Gastrocnemius medialis (tissue), 4 donors: ENCODE measurements at regions of chr4 and their contacts with region 1.

Region 1: GRCh38 chr4:2963175-2963965 is at the starts of genes GRK4 and NOP14:
- DNase-seq: peak; percentile 96 to 98
- ATAC-seq: peak; percentile 83 to 91
- H3K4me3 ChIP-seq: peak within 1 kb of the TSS; percentile 78 to 99 (median 86)
- H3K27ac ChIP-seq: peak within 1 kb of the TSS; percentile 91 to 95 (median 94)
- H3K4me1 ChIP-seq: peaks cover 25 to 28% of the 10 kb centered on the region in 2 donors
- H3K27me3 ChIP-seq: no peaks in the 10 kb centered on the region
- CTCF ChIP-seq: peak in 2 of 5 experiments; percentile 24 to 48
- POLR2A ChIP-seq: peak; percentile 85 to 87
- total RNA-seq, gene GRK4: 2.8 to 5.8 (median 3.7) TPM
- total RNA-seq, gene NOP14: 16.6 to 46.2 (median 36.2) TPM

Region 2: GRCh38 chr4:2241410-2242353 is 721.7 kb before region 1 on chr4 and contains the starts of genes HAUS3 and POLN:
- in situ Hi-C with region 1: loop called in 1 of 4 experiments (anchors 25 kb)
- intact Hi-C with region 1: loop called (anchors 5 kb)
- DNase-seq: peak; percentile 96 to 97
- ATAC-seq: peak; percentile 97 to 98
- H3K4me3 ChIP-seq: peak within 1 kb of the TSS; percentile 88 to 98 (median 92)
- H3K27ac ChIP-seq: peak within 1 kb of the TSS; percentile 75 to 86 (median 82)
- H3K4me1 ChIP-seq: peaks cover 34 to 39% of the 10 kb centered on the region in 2 donors
- H3K27me3 ChIP-seq: no peaks in the 10 kb centered on the region
- CTCF ChIP-seq: no peak
- POLR2A ChIP-seq: peak; percentile 74 to 86
- total RNA-seq, gene HAUS3: 4.8 to 12.1 (median 9.5) TPM
- total RNA-seq, gene POLN: 0.71 to 2.0 (median 0.86) TPM in 3 of 4 donors, not detected in the other

Region 3: DNA sequence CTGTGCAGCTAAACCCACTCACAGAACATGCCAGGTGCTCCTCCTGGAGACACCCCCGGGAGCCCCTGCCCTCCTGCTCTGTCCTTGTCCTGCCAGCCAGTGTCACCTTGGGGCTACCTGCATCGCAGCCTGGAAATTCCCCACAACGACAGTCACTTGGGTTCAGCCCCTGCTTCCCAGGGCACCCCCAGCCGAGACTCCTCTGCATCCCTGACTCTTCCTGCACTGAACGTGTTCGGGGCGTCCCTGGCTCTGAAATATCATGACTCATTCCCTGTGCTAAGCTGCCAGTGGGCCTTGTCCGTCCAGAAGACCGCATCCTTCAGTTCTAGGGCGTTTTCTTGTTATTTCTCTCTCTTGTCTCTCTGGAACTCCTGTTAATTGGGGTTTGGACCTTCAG is 538.8 kb before region 1 on chr4:
- in situ Hi-C with region 1: loop called in 1 of 4 experiments (anchors 10 kb)
- intact Hi-C with region 1: no loop called
- DNase-seq: no peak
- ATAC-seq: no peak
- H3K4me3 ChIP-seq: no peak overlapping the region
- H3K27ac ChIP-seq: no peak overlapping the region
- H3K4me1 ChIP-seq: no peaks in the 10 kb centered on the region
- H3K27me3 ChIP-seq: peaks cover 0 to 15% (median 8%) of the 10 kb centered on the region in 3 donors
- CTCF ChIP-seq: no peak
- POLR2A ChIP-seq: no peak

Region 4: GRCh38 chr4:2462218-2462991 is 501.0 kb before region 1 on chr4:
- in situ Hi-C with region 1: no loop called
- intact Hi-C with region 1: no loop called
- DNase-seq: peak; percentile 38 to 46
- ATAC-seq: peak; percentile 81 to 86
- H3K4me3 ChIP-seq: peak overlapping the region; percentile 34 to 73 (median 58)
- H3K27ac ChIP-seq: peak overlapping the region in 3 of 4 donors; percentile 34 to 37 (median 35)
- H3K4me1 ChIP-seq: peaks cover 5 to 8% of the 10 kb centered on the region in 2 donors
- H3K27me3 ChIP-seq: no peaks in the 10 kb centered on the region
- CTCF ChIP-seq: peak in 4 of 5 experiments; percentile 36 to 78 (median 62)
- POLR2A ChIP-seq: no peak

Region 5: DNA sequence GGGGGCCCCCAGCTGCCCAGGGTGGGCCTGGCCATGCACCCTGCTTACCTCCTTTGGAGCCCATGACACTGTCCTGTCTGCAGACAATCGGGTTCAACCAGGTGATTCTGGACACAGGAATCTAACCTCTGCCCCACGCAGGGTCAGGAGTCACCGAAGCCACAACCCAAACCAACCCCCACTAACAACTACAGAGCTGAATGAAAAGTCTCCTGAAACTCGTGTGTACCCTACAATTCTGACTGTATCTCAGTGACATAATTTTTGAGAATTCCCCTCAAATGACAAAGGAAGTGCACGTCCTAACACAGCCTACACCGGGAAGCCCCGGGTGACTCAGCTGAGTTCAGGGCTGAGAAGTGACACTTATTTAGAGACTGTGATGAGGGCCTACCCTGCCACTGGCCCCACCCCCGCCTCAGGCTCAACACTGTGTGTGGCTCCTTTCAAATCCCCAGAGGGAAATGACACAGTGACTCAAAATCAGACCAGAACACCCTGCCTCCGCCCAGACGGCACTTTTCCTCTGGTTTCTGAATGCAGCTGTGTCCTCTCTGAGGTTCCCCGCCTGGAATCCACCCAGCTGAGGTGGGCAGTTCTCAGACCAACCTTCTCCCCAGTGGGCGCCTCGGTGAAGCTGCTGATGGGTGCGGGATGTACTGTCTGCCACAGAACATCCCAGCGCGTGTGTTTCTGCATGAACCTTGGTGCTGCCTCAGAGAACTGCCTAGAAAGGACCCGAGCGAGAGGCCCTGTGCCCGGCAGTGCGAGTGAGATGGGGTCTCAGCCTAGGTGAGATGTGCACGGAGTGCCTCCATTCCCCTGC is 217.2 kb before region 1 on chr4:
- in situ Hi-C with region 1: no loop called
- intact Hi-C with region 1: no loop called
- DNase-seq: no peak
- ATAC-seq: peak; percentile 39 to 43
- H3K4me3 ChIP-seq: no peak overlapping the region
- H3K27ac ChIP-seq: peak overlapping the region in 3 of 4 donors; percentile 16 to 44 (median 22)
- H3K4me1 ChIP-seq: peaks cover 0 to 5% of the 10 kb centered on the region in 2 donors
- H3K27me3 ChIP-seq: no peaks in the 10 kb centered on the region
- CTCF ChIP-seq: no peak
- POLR2A ChIP-seq: no peak

Region 6: GRCh38 chr4:2761035-2761923 is 202.1 kb before region 1 on chr4:
- in situ Hi-C with region 1: no loop called
- intact Hi-C with region 1: loop called (anchors 2 kb)
- DNase-seq: no peak
- ATAC-seq: no peak
- H3K4me3 ChIP-seq: no peak overlapping the region
- H3K27ac ChIP-seq: no peak overlapping the region
- H3K4me1 ChIP-seq: peaks cover 0 to 4% of the 10 kb centered on the region in 2 donors
- H3K27me3 ChIP-seq: no peaks in the 10 kb centered on the region
- CTCF ChIP-seq: no peak
- POLR2A ChIP-seq: no peak

Region 7: GRCh38 chr4:2867758-2868491 is 95.4 kb before region 1 on chr4:
- in situ Hi-C with region 1: no loop called
- intact Hi-C with region 1: no loop called
- DNase-seq: no peak
- ATAC-seq: peak; percentile 29 to 44
- H3K4me3 ChIP-seq: peak overlapping the region; percentile 24 to 45 (median 36)
- H3K27ac ChIP-seq: peak overlapping the region; percentile 75 to 84 (median 79)
- H3K4me1 ChIP-seq: peaks cover 96 to 99% of the 10 kb centered on the region in 2 donors
- H3K27me3 ChIP-seq: no peaks in the 10 kb centered on the region
- CTCF ChIP-seq: no peak
- POLR2A ChIP-seq: peak in 1 of 2 donors; percentile 16

Region 8: GRCh38 chr4:3037957-3038461 is 74.6 kb after region 1 on chr4:
- in situ Hi-C with region 1: no loop called
- intact Hi-C with region 1: loop called (anchors 5 kb)
- DNase-seq: peak in 1 of 2 donors; percentile 36
- ATAC-seq: no peak
- H3K4me3 ChIP-seq: peak overlapping the region in 2 of 4 donors; percentile 12 to 18
- H3K27ac ChIP-seq: peak overlapping the region in 2 of 4 donors; percentile 19 to 41
- H3K4me1 ChIP-seq: peaks cover 20% of the 10 kb centered on the region in 2 donors
- H3K27me3 ChIP-seq: no peaks in the 10 kb centered on the region
- CTCF ChIP-seq: no peak
- POLR2A ChIP-seq: no peak